Activated CD4-positive, alpha-beta T cell treated with anti-CD3 and anti-CD28 coated beads for 36 hours (primary cell): ENCODE measurements at regions of chr3 and their contacts with region 1.

Region 1: DNA sequence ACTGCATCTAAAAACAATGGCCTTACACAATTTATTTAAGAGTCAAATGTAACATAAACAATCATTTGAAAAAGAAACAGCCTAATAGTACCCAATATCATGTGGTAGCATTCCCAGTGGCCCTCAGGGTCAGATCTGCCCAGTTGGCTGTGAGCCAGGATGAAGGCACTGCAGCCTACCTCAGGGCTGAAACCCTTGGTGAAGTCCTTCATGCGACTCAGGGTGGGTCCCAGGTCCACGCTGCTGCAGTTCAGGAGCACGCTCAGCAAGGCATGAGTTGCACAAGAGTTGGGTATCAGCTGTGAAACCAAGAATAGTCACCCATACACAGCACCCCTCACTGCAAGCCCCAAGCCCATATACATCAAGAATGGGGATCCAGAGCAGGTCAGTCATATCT is 37.1 kb downstream of the SEMA3G start:
- DNase-seq: no peak
- ATAC-seq: no peak
- H3K4me3 Mint-ChIP-seq: peak overlapping the region; percentile 94
- H3K27ac Mint-ChIP-seq: no peak overlapping the region
- H3K4me1 Mint-ChIP-seq: peaks cover 33% of the 10 kb centered on the region
- H3K27me3 Mint-ChIP-seq: no peaks in the 10 kb centered on the region

Region 2: GRCh38 chr3:52428151-52429005 is 20.6 kb after region 1 on chr3:
- CTCF ChIA-PET with region 1: interaction called, 18 read pairs
- POLR2A ChIA-PET with region 1: no interaction called
- intact Hi-C with region 1: no loop called
- DNase-seq: peak; percentile 61
- ATAC-seq: peak; percentile 90
- H3K4me3 Mint-ChIP-seq: no peak overlapping the region
- H3K27ac Mint-ChIP-seq: no peak overlapping the region
- H3K4me1 Mint-ChIP-seq: no peaks in the 10 kb centered on the region
- H3K27me3 Mint-ChIP-seq: no peaks in the 10 kb centered on the region